ENCODE measurements at regions of chr12 and their contacts with region 1.

Region 1: DNA sequence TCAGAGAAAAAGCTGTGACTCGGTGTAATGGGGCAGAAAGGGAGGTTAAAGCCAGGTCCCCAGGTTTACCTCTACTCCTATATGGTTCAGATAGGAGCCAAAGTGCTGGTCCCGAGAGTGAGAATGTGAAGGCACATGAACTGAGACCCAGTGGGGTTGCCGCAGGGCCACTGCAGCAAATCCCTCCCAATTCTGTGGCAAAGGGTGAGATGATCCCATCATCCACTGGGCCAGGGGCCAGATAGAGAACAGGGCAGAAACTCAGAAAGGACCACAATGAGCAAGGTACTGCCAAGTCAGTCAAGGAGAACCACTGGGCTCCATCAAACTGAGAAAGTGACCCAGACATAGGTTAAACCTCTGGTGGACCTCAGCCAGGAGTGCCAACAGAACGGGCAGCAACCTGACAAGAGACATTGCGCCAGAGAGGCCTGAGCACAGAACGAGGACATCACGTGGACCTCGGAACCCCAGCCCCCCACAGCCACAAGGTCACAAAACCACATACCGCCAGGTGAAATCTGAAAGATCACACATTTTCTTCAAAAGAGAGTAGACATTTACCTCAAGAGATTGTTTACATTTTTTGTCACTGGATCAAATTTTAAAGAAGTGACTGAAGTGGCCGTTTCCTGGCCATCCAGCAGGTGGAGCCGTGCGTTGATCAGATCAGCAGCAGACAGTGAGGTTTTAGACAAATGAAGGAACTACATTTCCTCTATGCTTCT is 20.5 kb upstream of the ITPR2 start:
- DNase-seq: peak; percentile 82
- H3K4me3 Mint-ChIP-seq: no peak overlapping the region
- H3K27ac Mint-ChIP-seq: no peak overlapping the region
- H3K4me1 Mint-ChIP-seq: no peaks in the 10 kb centered on the region
- H3K27me3 Mint-ChIP-seq: peaks cover 4% of the 10 kb centered on the region

Region 2: DNA sequence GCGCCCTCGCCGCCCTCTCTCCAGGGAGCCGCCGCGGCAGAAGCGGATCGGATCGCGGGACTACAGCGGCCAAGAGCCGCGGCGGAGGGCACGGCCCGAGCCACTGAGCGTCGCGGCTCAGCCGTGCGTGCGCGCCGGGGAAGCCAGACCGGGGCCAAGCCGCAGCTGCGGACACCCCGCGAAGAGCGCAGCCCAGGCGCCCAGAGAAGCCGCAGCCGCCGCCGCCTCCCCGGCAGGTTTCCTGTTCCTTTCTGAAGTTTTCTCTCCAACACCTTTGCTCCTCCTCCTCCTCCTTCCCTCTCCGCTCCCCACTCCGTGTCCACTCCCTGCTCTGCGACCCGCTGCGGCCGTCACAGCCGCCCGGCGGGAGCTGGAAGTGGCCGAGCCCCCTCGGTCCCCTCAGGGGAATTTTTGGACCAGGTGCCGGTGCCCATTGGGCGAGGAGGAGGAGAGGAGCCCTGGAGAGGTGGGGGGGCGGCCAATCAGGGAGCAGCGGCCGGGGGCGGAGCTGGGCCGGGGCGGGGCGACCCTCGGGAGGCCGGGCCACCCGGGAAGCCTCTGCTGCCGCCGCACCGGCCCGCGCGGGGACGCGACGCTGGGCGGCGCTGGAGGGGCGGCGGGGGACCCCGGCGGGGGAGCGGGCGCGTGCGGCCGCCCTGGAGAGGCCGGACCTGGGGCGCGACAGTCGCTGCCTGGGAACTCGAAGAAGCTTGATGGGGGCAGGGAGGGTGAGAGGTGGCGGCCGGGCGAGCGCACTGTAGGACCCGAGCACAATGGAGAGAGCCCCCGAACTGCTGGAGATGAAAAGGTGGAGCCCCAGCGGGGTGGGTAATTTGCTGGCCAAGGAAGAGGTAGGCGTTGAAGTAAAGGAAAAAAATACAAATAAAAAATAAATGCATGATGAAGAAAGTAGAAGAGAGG is 20.4 kb before region 1 on chr12 and contains the start of gene ITPR2:
- CTCF ChIA-PET with region 1: interaction called, 3 read pairs
- POLR2A ChIA-PET with region 1: no interaction called
- intact Hi-C with region 1: loop called (anchors 1 kb)
- DNase-seq: peak; percentile 96
- H3K4me3 Mint-ChIP-seq: peak within 1 kb of the TSS; percentile 99
- H3K27ac Mint-ChIP-seq: peak within 1 kb of the TSS; percentile 98
- H3K4me1 Mint-ChIP-seq: peaks cover 34% of the 10 kb centered on the region
- H3K27me3 Mint-ChIP-seq: no peaks in the 10 kb centered on the region
- total RNA-seq, gene ITPR2: 23.7 to 25.0 TPM

Region 3: GRCh38 chr12:26870491-26871419 is 17.3 kb after region 1 on chr12:
- CTCF ChIA-PET with region 1: interaction called, 4 read pairs
- POLR2A ChIA-PET with region 1: no interaction called
- intact Hi-C with region 1: loop called (anchors 1 kb)
- DNase-seq: no peak
- H3K4me3 Mint-ChIP-seq: no peak overlapping the region
- H3K27ac Mint-ChIP-seq: no peak overlapping the region
- H3K4me1 Mint-ChIP-seq: peaks cover 10% of the 10 kb centered on the region
- H3K27me3 Mint-ChIP-seq: no peaks in the 10 kb centered on the region

Region 4: DNA sequence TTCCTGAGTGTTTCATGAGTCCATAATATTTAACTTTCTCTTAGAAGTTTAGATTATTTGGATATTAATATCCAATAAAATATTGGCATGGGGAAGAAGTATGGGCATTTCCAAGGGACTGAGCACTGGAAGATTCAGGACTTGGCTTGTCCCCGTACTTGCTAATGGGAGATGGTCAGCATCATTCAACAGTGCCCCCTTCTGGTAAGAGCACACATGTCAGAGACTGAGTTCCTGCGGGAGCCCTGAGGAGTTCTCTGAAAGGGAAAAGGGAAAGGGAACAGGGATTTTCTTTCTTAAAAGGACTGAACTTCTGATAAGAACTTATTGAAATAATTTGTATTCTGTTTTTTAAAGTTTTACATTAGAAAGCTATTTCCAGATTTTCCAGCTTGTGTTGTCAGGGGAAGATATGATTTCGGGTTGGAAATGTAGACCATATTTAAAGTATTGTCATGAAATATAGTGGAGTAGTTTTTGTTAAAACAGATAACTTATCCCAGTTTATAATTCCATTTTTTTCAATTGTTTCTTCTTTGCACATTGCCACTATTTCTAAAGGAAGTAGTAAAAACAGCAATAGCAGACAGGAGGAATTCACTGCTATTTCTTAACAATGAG is 288.7 kb after region 1 on chr12:
- CTCF ChIA-PET with region 1: no interaction called
- POLR2A ChIA-PET with region 1: no interaction called
- intact Hi-C with region 1: loop called (anchors 2 kb)
- DNase-seq: peak; percentile 51
- H3K4me3 Mint-ChIP-seq: no peak overlapping the region
- H3K27ac Mint-ChIP-seq: no peak overlapping the region
- H3K4me1 Mint-ChIP-seq: peaks cover 6% of the 10 kb centered on the region
- H3K27me3 Mint-ChIP-seq: no peaks in the 10 kb centered on the region

Measured in activated CD4-positive, alpha-beta memory T cell treated with anti-CD3 and anti-CD28 coated beads for 36 hours (primary cell).